ENCODE measurements at regions of chr1 and their contacts with region 1.

Region 1: GRCh38 chr1:226062558-226063223 is at the start of gene H3-3A:
- DNase-seq: peak; percentile 96
- ATAC-seq: peak; percentile 77
- H3K4me3 ChIP-seq: peak within 1 kb of the TSS; percentile 97
- H3K27ac ChIP-seq: peak within 1 kb of the TSS; percentile 85
- H3K4me1 ChIP-seq: peaks cover 23% of the 10 kb centered on the region
- H3K27me3 ChIP-seq: no peaks in the 10 kb centered on the region
- CTCF ChIP-seq: no peak
- total RNA-seq, gene H3-3A: 196 and 273 TPM in 2 replicates

Region 2: GRCh38 chr1:225999227-225999911 is 63.3 kb before region 1 on chr1 and contains the start of gene SDE2:
- CTCF ChIA-PET with region 1: interaction called, 6 read pairs
- POLR2A ChIA-PET with region 1: interaction called, 8 read pairs
- intact Hi-C with region 1: loop called (anchors 1 kb)
- DNase-seq: peak; percentile 99
- ATAC-seq: peak; percentile 96
- H3K4me3 ChIP-seq: peak within 1 kb of the TSS; percentile 94
- H3K27ac ChIP-seq: peak within 1 kb of the TSS; percentile 23; the same call in 1 of the 2 replicates
- H3K4me1 ChIP-seq: peaks cover 23% of the 10 kb centered on the region
- H3K27me3 ChIP-seq: no peaks in the 10 kb centered on the region
- CTCF ChIP-seq: no peak
- total RNA-seq, gene SDE2: 26.1 and 30.2 TPM in 2 replicates

Region 3: GRCh38 chr1:226019572-226019971 is 43.1 kb before region 1 on chr1:
- CTCF ChIA-PET with region 1: interaction called, 15 read pairs
- POLR2A ChIA-PET with region 1: no interaction called
- intact Hi-C with region 1: no loop called
- DNase-seq: no peak
- ATAC-seq: no peak
- H3K4me3 ChIP-seq: no peak overlapping the region
- H3K27ac ChIP-seq: no peak overlapping the region
- H3K4me1 ChIP-seq: no peaks in the 10 kb centered on the region
- H3K27me3 ChIP-seq: no peaks in the 10 kb centered on the region
- CTCF ChIP-seq: no peak

Region 4: DNA sequence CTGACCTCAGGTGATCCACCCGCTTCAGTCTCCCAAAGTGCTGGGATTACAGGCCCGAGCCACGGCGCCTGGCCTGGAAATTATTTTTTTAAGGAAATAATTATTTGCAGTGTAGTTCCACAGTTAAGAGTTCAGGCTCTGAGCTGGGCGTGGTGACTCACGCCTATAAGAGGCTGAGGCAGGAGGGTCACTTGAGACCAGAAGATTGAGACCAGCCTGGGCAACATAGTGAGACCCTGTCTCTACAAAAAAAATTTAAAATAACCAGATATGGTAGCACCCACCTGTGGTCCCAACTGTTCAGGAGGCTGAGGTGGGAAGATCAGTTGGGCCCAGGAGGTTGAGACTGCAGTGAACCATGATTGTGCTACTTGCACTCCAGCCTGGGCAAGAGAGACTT is 13.7 kb after region 1 on chr1:
- CTCF ChIA-PET with region 1: interaction called, 14 read pairs
- POLR2A ChIA-PET with region 1: no interaction called
- intact Hi-C with region 1: no loop called
- DNase-seq: no peak
- ATAC-seq: peak; percentile 34; the same call in 1 of the 2 replicates
- H3K4me3 ChIP-seq: no peak overlapping the region
- H3K27ac ChIP-seq: no peak overlapping the region
- H3K4me1 ChIP-seq: no peaks in the 10 kb centered on the region
- H3K27me3 ChIP-seq: no peaks in the 10 kb centered on the region
- CTCF ChIP-seq: no peak

Region 5: GRCh38 chr1:226083302-226084101 is 20.8 kb after region 1 on chr1:
- CTCF ChIA-PET with region 1: interaction called, 20 read pairs
- POLR2A ChIA-PET with region 1: interaction called, 13 read pairs
- intact Hi-C with region 1: loop called (anchors 1 kb)
- DNase-seq: peak; percentile 90
- ATAC-seq: peak; percentile 89
- H3K4me3 ChIP-seq: peak overlapping the region; percentile 84
- H3K27ac ChIP-seq: peak overlapping the region; percentile 58
- H3K4me1 ChIP-seq: peaks cover 10% of the 10 kb centered on the region
- H3K27me3 ChIP-seq: no peaks in the 10 kb centered on the region
- CTCF ChIP-seq: no peak; the same call in 1 of the 2 replicates

Region 6: DNA sequence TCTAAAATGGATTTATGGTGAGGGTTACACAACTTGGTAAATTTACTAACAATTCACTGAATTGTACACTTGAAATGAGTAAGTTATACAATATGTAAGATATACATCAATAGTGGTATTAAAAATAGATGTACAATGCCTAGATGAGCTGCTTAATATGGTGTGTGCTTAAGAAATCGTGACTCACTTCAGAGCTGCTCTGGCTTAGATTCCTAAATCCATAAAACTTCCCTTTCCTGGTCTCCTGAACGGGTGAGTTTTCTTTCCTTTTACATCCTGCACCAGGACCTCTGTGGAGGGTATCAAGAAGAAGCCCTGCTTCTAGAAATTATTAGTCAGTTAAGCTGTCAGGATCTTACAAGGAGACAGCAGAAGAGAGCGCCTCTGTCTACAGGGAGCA is 30.3 kb after region 1 on chr1:
- CTCF ChIA-PET with region 1: interaction called, 13 read pairs
- POLR2A ChIA-PET with region 1: interaction called, 26 read pairs
- intact Hi-C with region 1: no loop called
- DNase-seq: peak; percentile 80
- ATAC-seq: peak; percentile 93
- H3K4me3 ChIP-seq: no peak overlapping the region
- H3K27ac ChIP-seq: peak overlapping the region; percentile 84
- H3K4me1 ChIP-seq: peaks cover 26% of the 10 kb centered on the region
- H3K27me3 ChIP-seq: no peaks in the 10 kb centered on the region
- CTCF ChIP-seq: no peak

Region 7: DNA sequence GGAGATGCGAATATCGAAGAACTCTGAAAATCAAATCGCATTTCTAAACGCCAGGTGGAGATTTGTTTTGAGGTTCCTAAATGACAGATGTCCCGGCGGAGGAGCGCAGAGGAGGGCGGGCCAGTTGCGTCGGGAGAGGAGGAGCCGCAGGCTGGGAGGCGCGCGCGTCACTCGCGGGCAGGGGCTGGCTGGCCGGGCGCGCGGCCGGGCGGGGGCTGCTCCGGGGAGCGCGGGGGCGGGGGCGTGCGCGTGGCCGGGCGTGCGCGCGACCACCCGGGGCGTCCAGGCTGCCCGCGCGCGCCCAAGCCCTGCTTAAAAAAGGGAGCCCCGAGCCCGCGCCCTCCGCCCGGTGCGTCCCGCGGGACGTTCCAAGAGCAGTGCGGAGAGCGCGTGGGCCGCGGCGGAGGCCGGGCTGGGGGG is 47.1 kb after region 1 on chr1:
- CTCF ChIA-PET with region 1: interaction called, 10 read pairs
- POLR2A ChIA-PET with region 1: interaction called, 6 read pairs
- intact Hi-C with region 1: loop called (anchors 2 kb)
- DNase-seq: peak; percentile 97
- ATAC-seq: peak; percentile 88
- H3K4me3 ChIP-seq: peak overlapping the region; percentile 79
- H3K27ac ChIP-seq: peak overlapping the region; percentile 71
- H3K4me1 ChIP-seq: peaks cover 29% of the 10 kb centered on the region
- H3K27me3 ChIP-seq: no peaks in the 10 kb centered on the region
- CTCF ChIP-seq: peak; percentile 41

Measured in PC-3 (cell line).